B cell (primary cell): ENCODE measurements at regions of chr12 and their contacts with region 1.

Region 1: DNA sequence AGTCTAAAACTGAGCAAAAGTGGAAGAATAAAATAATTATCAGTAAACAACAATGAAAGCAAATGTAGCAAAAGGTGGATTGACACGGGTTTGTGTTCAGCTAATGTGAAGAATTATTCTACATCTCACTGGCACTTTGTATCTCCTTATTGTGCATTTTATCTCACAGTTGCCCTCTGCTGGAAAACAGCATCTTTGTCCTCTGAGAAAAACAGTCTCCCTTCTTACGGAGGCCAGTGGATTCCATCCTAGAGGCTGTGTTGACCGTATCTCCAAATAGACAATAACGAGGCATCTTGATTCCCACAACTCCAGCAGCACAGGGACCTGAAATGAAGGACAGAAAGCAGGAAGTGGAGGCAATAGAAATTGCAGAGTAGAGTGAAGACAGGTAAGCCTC is 51.3 kb upstream of the PLBD1 start:
- DNase-seq: peak; percentile 32
- ATAC-seq: no peak
- H3K4me3 ChIP-seq: no peak overlapping the region
- H3K4me3 Mint-ChIP-seq: no peak overlapping the region
- H3K27ac ChIP-seq: no peak overlapping the region
- H3K27ac Mint-ChIP-seq: peak overlapping the region; percentile 17
- H3K4me1 ChIP-seq: peaks cover 34 to 40% of the 10 kb centered on the region in 2 donors
- H3K4me1 Mint-ChIP-seq: peaks cover 42% of the 10 kb centered on the region
- H3K27me3 ChIP-seq: no peaks in the 10 kb centered on the region
- H3K27me3 Mint-ChIP-seq: no peaks in the 10 kb centered on the region
- CTCF ChIP-seq: peak; percentile 23

Region 2: GRCh38 chr12:14514154-14514842 is 104.7 kb before region 1 on chr12:
- CTCF ChIA-PET with region 1: interaction called, 35 read pairs
- POLR2A ChIA-PET with region 1: no interaction called
- intact Hi-C with region 1: loop called (anchors 2 kb)
- DNase-seq: peak; percentile 47
- ATAC-seq: peak; percentile 57
- H3K4me3 ChIP-seq: no peak overlapping the region
- H3K4me3 Mint-ChIP-seq: no peak overlapping the region
- H3K27ac ChIP-seq: no peak overlapping the region
- H3K27ac Mint-ChIP-seq: no peak overlapping the region
- H3K4me1 ChIP-seq: no peaks in the 10 kb centered on the region
- H3K4me1 Mint-ChIP-seq: no peaks in the 10 kb centered on the region
- H3K27me3 ChIP-seq: no peaks in the 10 kb centered on the region
- H3K27me3 Mint-ChIP-seq: no peaks in the 10 kb centered on the region
- CTCF ChIP-seq: peak; percentile 53

Region 3: DNA sequence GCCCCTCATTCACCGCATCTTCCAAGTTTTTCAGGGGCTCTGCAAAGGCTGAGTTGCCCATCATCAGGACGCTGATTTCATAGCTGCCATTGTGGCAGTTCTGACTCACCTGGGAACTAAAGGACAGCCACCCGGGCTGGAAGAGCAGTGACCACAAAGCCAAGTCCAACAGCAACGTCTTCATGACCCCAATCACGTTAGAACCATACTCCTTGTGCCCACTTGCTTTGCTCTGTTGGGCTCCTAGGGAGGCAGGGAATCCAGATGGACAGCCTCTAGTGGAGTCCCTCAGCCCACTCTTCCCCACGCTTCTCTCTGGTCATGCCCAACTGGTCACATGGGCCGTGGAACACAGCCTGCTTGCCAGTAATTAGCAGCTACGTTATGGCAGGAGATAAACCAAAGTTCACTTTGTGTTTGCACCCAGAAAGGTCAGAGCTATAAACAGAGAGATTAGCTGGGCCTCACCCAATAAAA is 77.3 kb after region 1 on chr12 and contains the start of gene GUCY2C:
- CTCF ChIA-PET with region 1: no interaction called
- POLR2A ChIA-PET with region 1: no interaction called
- intact Hi-C with region 1: no loop called
- DNase-seq: no peak
- ATAC-seq: no peak
- H3K4me3 ChIP-seq: no peak within 1 kb of the TSS
- H3K4me3 Mint-ChIP-seq: no peak within 1 kb of the TSS
- H3K27ac ChIP-seq: no peak within 1 kb of the TSS
- H3K27ac Mint-ChIP-seq: no peak within 1 kb of the TSS
- H3K4me1 ChIP-seq: no peaks in the 10 kb centered on the region
- H3K4me1 Mint-ChIP-seq: peaks cover 2% of the 10 kb centered on the region
- H3K27me3 ChIP-seq: peaks cover 0 to 2% (median 0%) of the 10 kb centered on the region in 4 experiments
- H3K27me3 Mint-ChIP-seq: peaks cover 16% of the 10 kb centered on the region
- CTCF ChIP-seq: no peak
- total RNA-seq, gene GUCY2C: 0.29 and 0.37 TPM in 2 replicates

Region 4: DNA sequence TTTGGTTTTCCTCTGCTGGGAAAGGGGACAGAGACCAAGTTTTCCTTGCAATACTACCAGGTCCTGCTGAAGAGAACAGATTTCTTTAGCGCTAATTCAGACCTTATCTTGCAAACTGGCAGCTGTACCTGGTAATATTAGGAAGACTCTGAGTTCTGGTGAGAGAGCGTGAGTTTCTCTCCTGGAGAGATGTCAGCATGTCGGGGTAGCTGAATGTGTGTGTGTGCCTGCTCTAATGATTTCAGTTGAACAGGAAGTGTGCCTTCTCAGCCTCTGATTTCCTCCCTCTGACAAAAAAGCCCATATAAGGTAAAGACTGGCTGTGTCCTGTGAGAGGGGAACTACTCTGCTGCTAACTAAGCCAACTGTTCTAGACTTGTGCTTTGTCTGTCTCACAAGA is 329.7 kb after region 1 on chr12:
- CTCF ChIA-PET with region 1: no interaction called
- POLR2A ChIA-PET with region 1: no interaction called
- intact Hi-C with region 1: loop called (anchors 10 kb)
- DNase-seq: peak; percentile 88
- ATAC-seq: peak; percentile 94
- H3K4me3 ChIP-seq: peak overlapping the region in 3 of 5 experiments; percentile 26 to 53 (median 27)
- H3K4me3 Mint-ChIP-seq: peak overlapping the region; percentile 84
- H3K27ac ChIP-seq: peak overlapping the region; percentile 65 to 94
- H3K27ac Mint-ChIP-seq: peak overlapping the region; percentile 97
- H3K4me1 ChIP-seq: peaks cover 61 to 71% of the 10 kb centered on the region in 2 donors
- H3K4me1 Mint-ChIP-seq: peaks cover 72% of the 10 kb centered on the region
- H3K27me3 ChIP-seq: no peaks in the 10 kb centered on the region
- H3K27me3 Mint-ChIP-seq: no peaks in the 10 kb centered on the region
- CTCF ChIP-seq: no peak